ENCODE measurements at regions of chr3 and their contacts with region 1.

Region 1: GRCh38 chr3:141412087-141412935 is 44.0 kb downstream of the ZBTB38 start:
- DNase-seq: peak in 1 of 2 donors; percentile 69
- ATAC-seq: peak; percentile 43 to 78 (median 63)
- H3K4me3 ChIP-seq: peak overlapping the region; percentile 64
- H3K27ac ChIP-seq: peak overlapping the region; percentile 96
- H3K4me1 ChIP-seq: peaks cover 53% of the 10 kb centered on the region
- H3K27me3 ChIP-seq: no peaks in the 10 kb centered on the region
- CTCF ChIP-seq: no peak

Region 2: GRCh38 chr3:141431411-141432378 is 19.4 kb after region 1 on chr3:
- intact Hi-C with region 1: loop called in 1 of 2 experiments (anchors 1 kb)
- DNase-seq: no peak
- ATAC-seq: peak; percentile 58 to 78 (median 69)
- H3K4me3 ChIP-seq: peak overlapping the region; percentile 66
- H3K27ac ChIP-seq: peak overlapping the region; percentile 94
- H3K4me1 ChIP-seq: peaks cover 50% of the 10 kb centered on the region
- H3K27me3 ChIP-seq: no peaks in the 10 kb centered on the region
- CTCF ChIP-seq: no peak

Region 3: DNA sequence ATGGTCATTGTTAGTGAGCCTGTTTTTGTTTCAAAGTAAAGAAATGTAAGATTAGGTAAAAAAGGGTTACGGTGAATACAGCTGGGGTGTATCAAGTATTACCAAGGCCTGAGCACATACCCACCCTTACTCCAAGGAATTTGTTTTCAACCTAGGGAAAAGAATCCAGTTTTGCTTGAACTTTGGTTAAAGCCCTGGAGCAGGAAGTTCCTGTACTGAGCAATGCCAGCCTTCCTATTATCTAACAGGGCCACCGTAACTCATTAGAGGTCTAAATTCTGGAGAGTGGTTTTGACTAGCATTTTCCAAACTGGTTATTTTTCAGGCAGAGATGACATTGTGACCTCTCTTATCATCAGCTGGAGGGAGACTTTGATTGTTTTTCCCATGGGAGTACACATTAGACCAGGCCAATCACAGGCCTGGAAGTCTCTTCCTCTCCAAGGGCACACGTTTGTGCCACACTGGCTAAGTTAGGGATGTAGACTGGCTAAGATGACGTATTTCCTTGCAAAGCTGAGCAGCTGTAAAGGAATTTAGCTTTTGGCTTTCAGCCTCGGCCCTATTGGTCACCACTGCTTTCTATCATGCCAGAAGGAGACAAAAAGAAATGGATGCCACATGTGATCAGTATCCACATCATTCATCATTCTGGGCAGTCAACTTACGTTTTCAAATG is 298.4 kb after region 1 on chr3:
- intact Hi-C with region 1: no loop called
- DNase-seq: no peak
- ATAC-seq: no peak
- H3K4me3 ChIP-seq: no peak overlapping the region
- H3K27ac ChIP-seq: no peak overlapping the region
- H3K4me1 ChIP-seq: no peaks in the 10 kb centered on the region
- H3K27me3 ChIP-seq: no peaks in the 10 kb centered on the region
- CTCF ChIP-seq: no peak